ENCODE measurements at regions of chr6 and their contacts with region 1.

Region 1: GRCh38 chr6:166307082-166308032 is 835 bp downstream of the PRR18 start:
- DNase-seq: no peak
- ATAC-seq: no peak
- H3K4me3 ChIP-seq: no peak overlapping the region
- H3K27ac ChIP-seq: no peak overlapping the region
- H3K4me1 ChIP-seq: no peaks in the 10 kb centered on the region
- H3K27me3 ChIP-seq: no peaks in the 10 kb centered on the region
- CTCF ChIP-seq: no peak
- POLR2A ChIP-seq: no peak
- RAD21 ChIP-seq: no peak

Region 2: DNA sequence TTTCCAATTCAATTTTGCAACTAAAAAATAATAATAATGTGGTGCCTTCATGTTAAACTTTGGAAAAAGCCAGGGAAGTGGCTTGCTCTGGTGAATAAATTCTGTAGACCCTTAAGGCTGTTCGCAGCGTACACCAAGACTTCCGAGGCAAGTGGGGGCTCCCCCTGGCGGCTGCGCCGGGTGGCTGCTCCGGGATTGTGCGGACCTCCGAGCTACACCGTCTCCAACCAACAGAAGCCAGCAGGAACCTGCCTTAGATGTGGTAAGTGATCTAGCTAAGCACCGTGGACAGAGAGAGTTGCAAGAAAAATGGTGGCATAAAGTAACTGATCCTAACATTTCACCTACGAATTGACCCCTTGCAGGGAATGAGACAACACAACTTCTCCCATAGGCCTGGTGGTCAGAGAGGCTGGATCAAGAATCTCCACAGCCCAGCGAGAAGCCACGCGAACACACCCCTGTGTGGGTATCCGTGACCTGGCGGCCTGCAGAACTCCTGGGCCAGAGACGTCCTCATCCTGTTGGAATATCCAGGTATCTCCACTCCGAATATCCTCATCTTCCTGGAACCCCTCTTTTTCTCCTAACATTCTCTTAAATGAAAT is 209.3 kb before region 1 on chr6:
- CTCF ChIA-PET with region 1: no interaction called
- POLR2A ChIA-PET with region 1: no interaction called
- RAD21 ChIA-PET with region 1: no interaction called
- intact Hi-C with region 1: no loop called
- DNase-seq: peak; percentile 49
- ATAC-seq: peak; percentile 97
- H3K4me3 ChIP-seq: peak overlapping the region; percentile 29 to 54
- H3K27ac ChIP-seq: no peak overlapping the region
- H3K4me1 ChIP-seq: peaks cover 0 to 6% of the 10 kb centered on the region in 2 experiments; a peak in 1 of 4 replicates
- H3K27me3 ChIP-seq: no peaks in the 10 kb centered on the region
- CTCF ChIP-seq: peak; percentile 64 to 97 (median 89)
- POLR2A ChIP-seq: no peak
- RAD21 ChIP-seq: peak; percentile 66

Region 3: DNA sequence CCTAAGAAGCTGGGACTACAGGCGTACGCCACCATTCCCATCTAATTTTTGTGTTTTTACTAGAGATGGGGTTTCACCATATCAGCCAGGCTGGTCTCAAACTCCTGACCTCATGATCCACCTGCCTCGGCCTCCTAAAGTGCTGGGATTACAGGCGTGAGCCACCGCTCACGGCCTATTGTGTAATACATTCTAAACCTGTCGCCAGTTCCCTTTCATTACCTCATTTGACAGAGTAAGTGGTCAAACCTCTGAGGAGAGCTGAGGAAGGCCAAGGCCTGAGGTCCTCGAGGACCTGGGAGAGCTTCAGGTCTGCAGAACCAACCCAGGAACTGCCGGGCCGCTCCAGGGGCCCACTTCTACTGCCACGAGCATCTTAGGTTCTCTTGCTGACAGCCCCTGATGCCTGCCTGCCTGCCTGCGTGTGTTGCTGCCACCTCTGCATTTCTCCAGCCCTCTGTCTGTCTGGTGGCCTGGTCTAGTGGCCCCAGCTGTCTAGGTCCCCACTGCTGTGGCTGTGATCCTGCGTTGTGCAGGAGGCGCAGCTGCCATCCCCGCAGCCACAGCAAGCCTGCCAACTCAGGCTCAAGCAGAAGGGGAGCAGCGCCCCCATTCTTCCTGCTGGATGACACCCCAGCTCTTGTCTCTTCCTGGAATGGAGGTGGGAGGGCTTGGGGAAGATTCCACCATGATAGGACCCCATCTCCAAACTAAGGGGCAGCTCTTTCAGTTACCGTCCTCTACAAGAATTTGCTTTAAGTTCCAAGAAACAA is 44.4 kb before region 1 on chr6:
- CTCF ChIA-PET with region 1: no interaction called
- POLR2A ChIA-PET with region 1: no interaction called
- RAD21 ChIA-PET with region 1: no interaction called
- intact Hi-C with region 1: no loop called
- DNase-seq: no peak
- ATAC-seq: no peak
- H3K4me3 ChIP-seq: no peak overlapping the region
- H3K27ac ChIP-seq: no peak overlapping the region
- H3K4me1 ChIP-seq: peaks cover 0 to 15% of the 10 kb centered on the region in 2 experiments; a peak in 2 of 4 replicates
- H3K27me3 ChIP-seq: no peaks in the 10 kb centered on the region
- CTCF ChIP-seq: no peak
- POLR2A ChIP-seq: no peak
- RAD21 ChIP-seq: 0 out of 2 replicates have a peak, but pooled peaks have one; percentile 4

Region 4: GRCh38 chr6:166325383-166326042 is 18.2 kb after region 1 on chr6:
- CTCF ChIA-PET with region 1: no interaction called
- POLR2A ChIA-PET with region 1: no interaction called
- RAD21 ChIA-PET with region 1: no interaction called
- intact Hi-C with region 1: loop called (anchors 2 kb)
- DNase-seq: no peak
- ATAC-seq: no peak
- H3K4me3 ChIP-seq: no peak overlapping the region
- H3K27ac ChIP-seq: no peak overlapping the region
- H3K4me1 ChIP-seq: no peaks in the 10 kb centered on the region
- H3K27me3 ChIP-seq: no peaks in the 10 kb centered on the region
- CTCF ChIP-seq: no peak
- POLR2A ChIP-seq: no peak
- RAD21 ChIP-seq: no peak

Measured in HCT116 (cell line).